Heart right ventricle (tissue), 16 donors: ENCODE measurements at regions of chr1 and their contacts with region 1.

Region 1: GRCh38 chr1:166432655-166433054 is 265.9 kb upstream of the FAM78B start:
- DNase-seq: no peak
- ATAC-seq: no peak
- H3K4me3 ChIP-seq: no peak overlapping the region
- H3K27ac ChIP-seq: no peak overlapping the region
- H3K4me1 ChIP-seq: no peaks in the 10 kb centered on the region
- H3K27me3 ChIP-seq: no peaks in the 10 kb centered on the region
- CTCF ChIP-seq: no peak

Region 2: DNA sequence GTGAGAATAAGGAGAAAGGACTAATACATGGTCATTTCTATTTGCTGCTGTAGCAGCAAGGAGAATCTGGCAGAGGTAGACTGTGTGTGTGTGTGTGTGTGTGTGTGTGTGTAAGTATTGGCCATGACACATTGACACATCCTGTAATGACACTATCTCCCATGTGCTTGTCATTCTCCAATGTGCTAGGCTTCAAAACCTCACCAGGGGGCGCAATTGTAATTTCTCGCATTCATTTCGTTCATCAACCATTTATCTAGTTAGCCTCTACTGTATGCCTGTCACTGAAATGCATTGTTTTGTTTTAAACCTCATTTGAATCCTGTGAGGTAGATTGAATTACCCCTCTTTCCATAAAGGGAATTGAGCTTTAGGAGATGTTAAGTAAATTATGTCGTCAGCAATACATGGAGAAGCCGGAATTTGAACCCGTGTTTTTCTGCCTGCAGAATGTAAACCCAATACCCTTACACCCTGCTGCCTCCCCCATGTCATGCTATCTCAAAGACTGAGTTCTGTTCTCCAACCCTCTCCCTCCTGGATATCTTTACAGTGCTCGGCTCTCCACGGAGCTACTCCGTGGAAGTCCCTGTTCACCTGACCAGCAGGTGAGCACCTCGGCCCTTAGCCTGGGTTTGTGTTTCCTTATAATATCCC is 504.5 kb before region 1 on chr1:
- intact Hi-C with region 1: loop called (anchors 1 to 5 kb)
- DNase-seq: peak in 1 of 2 donors; percentile 23
- ATAC-seq: peak in 3 of 8 donors; percentile 27 to 49 (median 47)
- H3K4me3 ChIP-seq: no peak overlapping the region
- H3K27ac ChIP-seq: no peak overlapping the region
- H3K4me1 ChIP-seq: no peaks in the 10 kb centered on the region
- H3K27me3 ChIP-seq: peaks cover 0 to 1% (median 0%) of the 10 kb centered on the region in 7 donors
- CTCF ChIP-seq: peak in 8 of 9 donors; percentile 39 to 74 (median 66)

Region 3: GRCh38 chr1:165933446-165934178 is 499.0 kb before region 1 on chr1:
- intact Hi-C with region 1: loop called in 7 of 10 experiments (anchors 1 to 5 kb)
- DNase-seq: no peak
- ATAC-seq: no peak
- H3K4me3 ChIP-seq: no peak overlapping the region
- H3K27ac ChIP-seq: no peak overlapping the region
- H3K4me1 ChIP-seq: no peaks in the 10 kb centered on the region
- H3K27me3 ChIP-seq: peaks cover 0 to 5% (median 0%) of the 10 kb centered on the region in 7 donors
- CTCF ChIP-seq: no peak

Region 4: GRCh38 chr1:166133276-166133841 is 299.3 kb before region 1 on chr1:
- intact Hi-C with region 1: loop called in 1 of 10 experiments (anchors 10 kb)
- DNase-seq: no peak
- ATAC-seq: no peak
- H3K4me3 ChIP-seq: no peak overlapping the region
- H3K27ac ChIP-seq: no peak overlapping the region
- H3K4me1 ChIP-seq: peaks cover 0 to 4% (median 0%) of the 10 kb centered on the region in 9 donors
- H3K27me3 ChIP-seq: no peaks in the 10 kb centered on the region
- CTCF ChIP-seq: peak in 5 of 9 donors; percentile 6 to 27 (median 17)